GM10248 (cell line): ENCODE measurements at regions of chr10 and their contacts with region 1.

Region 1: GRCh38 chr10:97425964-97426775 is at the start of gene PGAM1:
- DNase-seq: peak; percentile 100
- CTCF ChIP-seq: peak; percentile 89

Region 2: GRCh38 chr10:97210543-97210961 is 215.6 kb before region 1 on chr10:
- CTCF ChIA-PET with region 1: no interaction called
- POLR2A ChIA-PET with region 1: no interaction called
- DNase-seq: peak; percentile 70
- CTCF ChIP-seq: peak; percentile 94

Region 3: GRCh38 chr10:97407211-97407951 is 18.8 kb before region 1 on chr10:
- CTCF ChIA-PET with region 1: interaction called, 62 read pairs
- POLR2A ChIA-PET with region 1: interaction called, 5 read pairs
- DNase-seq: peak; percentile 80
- CTCF ChIP-seq: peak; percentile 88

Region 4: GRCh38 chr10:97518301-97519043 is 92.3 kb after region 1 on chr10:
- CTCF ChIA-PET with region 1: no interaction called
- POLR2A ChIA-PET with region 1: no interaction called
- DNase-seq: no peak
- CTCF ChIP-seq: no peak